ENCODE measurements at regions of chr19 and their contacts with region 1.

Region 1: DNA sequence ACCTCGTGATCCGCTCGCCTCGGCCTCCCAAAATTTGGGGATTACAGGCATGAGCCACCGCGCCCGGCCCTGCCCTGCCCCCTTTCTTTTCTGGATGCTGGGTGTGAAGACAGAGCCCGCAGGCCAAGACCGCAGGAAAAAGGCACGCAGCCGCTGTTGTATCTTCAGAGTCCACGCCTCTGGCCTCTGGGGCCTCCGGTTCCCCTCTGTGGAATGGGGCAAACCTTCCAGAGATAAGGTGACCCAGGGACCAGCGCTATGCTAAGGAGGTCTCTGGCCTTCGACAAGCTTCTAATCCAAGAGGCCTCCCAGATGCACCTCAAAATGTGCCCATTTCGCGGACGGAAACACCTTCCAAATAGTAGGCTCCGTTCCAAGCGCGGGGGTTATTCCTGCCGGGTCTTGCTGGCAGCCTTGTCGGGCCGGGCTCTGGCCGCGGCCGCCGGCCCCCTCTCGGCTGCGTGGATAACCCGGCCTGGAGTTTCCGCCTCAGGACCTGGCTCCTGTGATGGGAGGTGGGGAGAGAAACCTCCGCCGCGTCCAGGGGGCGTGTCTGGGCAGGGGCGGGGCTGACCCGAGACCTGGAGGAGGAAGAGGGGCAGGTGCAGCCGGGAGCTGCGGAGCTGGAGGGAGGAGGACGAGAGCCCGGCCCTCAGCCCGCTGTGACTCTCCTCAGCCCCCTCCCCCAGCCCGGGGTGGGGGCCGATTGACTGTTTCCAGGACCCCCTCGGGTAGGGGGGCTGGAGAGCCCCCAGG is 13.1 kb downstream of the TJP3 start:
- DNase-seq: peak; percentile 83
- H3K4me3 ChIP-seq: no peak overlapping the region
- H3K27ac ChIP-seq: no peak overlapping the region
- H3K4me1 ChIP-seq: peaks cover 5% of the 10 kb centered on the region
- H3K27me3 ChIP-seq: no peaks in the 10 kb centered on the region
- CTCF ChIP-seq: no peak

Region 2: DNA sequence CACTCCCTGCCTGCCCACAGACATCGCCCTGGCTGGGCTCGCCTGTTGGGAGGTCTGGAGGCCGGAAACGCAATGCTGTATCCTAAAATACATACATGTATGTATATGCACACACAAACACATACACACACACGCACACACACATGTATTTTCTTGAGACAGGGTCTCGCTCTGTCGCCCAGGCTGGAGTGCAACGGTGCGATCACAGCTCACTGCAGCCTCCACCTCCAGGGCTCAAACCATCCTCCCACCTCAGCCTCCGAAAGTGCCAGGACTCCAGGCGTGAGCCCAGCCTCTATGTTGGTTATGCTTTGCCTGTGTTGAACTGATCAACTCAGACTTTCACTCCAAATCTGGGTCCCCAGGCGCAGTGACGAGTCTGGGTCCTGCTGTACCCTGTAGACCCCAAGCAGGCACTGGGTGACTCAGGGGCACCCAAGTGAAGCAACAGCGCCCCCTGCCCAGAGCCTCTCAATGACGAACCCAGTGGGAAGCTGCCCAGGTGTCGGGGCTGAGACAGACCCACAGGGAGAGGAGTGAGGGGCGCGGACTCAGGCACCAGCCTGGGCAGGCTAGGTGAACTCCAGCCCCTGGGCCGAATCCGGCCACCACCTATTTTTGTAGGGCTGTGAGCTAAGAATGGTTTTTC is 67.3 kb before region 1 on chr19:
- CTCF ChIA-PET with region 1: no interaction called
- dilution Hi-C with region 1: loop called (anchors 5 kb)
- in situ Hi-C with region 1: no loop called
- intact Hi-C with region 1: no loop called
- DNase-seq: no peak
- H3K4me3 ChIP-seq: no peak overlapping the region
- H3K27ac ChIP-seq: no peak overlapping the region
- H3K4me1 ChIP-seq: peaks cover 13% of the 10 kb centered on the region
- H3K27me3 ChIP-seq: no peaks in the 10 kb centered on the region
- CTCF ChIP-seq: no peak

Region 3: GRCh38 chr19:3687774-3688706 is 33.3 kb before region 1 on chr19:
- CTCF ChIA-PET with region 1: no interaction called
- dilution Hi-C with region 1: loop called (anchors 5 kb)
- in situ Hi-C with region 1: no loop called
- intact Hi-C with region 1: no loop called
- DNase-seq: peak; percentile 43
- H3K4me3 ChIP-seq: peak overlapping the region in 2 of 3 experiments; percentile 1 to 5
- H3K27ac ChIP-seq: no peak overlapping the region
- H3K4me1 ChIP-seq: peaks cover 10% of the 10 kb centered on the region
- H3K27me3 ChIP-seq: no peaks in the 10 kb centered on the region
- CTCF ChIP-seq: no peak

Region 4: DNA sequence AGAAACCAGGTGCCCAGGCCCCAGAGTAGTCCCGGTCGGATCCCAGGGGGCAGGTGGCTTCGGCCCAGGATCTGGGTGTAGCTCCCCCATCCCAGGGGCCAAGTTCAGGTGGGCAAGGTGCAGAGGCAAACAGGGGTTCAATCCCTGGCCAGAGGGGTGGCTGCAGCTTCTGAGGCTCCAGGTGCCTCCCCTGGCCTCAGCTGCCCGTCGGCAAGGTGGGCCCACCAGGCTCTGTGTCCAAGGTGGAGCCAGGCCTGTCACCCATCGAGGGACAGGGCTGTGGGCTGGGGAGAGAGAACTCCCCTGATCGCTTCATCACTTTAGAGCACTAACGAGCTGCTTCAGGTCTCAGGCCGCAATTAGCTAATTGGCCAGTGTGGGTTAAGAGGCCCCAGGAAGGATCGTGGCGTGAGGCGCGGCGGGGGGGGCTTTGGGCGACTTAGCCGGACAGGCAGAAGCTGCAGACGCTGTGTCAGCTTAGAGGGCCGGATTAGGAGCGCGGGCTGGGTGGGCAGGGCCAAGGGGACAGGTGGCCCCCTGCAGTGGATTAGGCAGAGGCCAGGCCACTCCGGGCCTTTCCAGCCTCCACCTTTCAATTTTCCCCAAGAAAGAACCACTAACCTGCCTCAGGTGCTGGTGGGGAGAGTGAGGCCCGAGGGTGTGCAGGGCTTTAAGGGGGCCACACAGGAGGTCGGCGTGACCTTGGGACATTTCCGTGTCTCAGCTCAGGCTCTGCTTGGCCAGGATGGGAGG is 53.5 kb after region 1 on chr19:
- CTCF ChIA-PET with region 1: no interaction called
- dilution Hi-C with region 1: loop called (anchors 5 kb)
- in situ Hi-C with region 1: no loop called
- intact Hi-C with region 1: no loop called
- DNase-seq: no peak
- H3K4me3 ChIP-seq: no peak overlapping the region
- H3K27ac ChIP-seq: no peak overlapping the region
- H3K4me1 ChIP-seq: no peaks in the 10 kb centered on the region
- H3K27me3 ChIP-seq: no peaks in the 10 kb centered on the region
- CTCF ChIP-seq: no peak

Measured in mammary epithelial cell (primary cell).